Activated CD4-positive, alpha-beta memory T cell treated with anti-CD3 and anti-CD28 coated beads for 36 hours (primary cell): ENCODE measurements at regions of chr6 and their contacts with region 1.

Region 1: DNA sequence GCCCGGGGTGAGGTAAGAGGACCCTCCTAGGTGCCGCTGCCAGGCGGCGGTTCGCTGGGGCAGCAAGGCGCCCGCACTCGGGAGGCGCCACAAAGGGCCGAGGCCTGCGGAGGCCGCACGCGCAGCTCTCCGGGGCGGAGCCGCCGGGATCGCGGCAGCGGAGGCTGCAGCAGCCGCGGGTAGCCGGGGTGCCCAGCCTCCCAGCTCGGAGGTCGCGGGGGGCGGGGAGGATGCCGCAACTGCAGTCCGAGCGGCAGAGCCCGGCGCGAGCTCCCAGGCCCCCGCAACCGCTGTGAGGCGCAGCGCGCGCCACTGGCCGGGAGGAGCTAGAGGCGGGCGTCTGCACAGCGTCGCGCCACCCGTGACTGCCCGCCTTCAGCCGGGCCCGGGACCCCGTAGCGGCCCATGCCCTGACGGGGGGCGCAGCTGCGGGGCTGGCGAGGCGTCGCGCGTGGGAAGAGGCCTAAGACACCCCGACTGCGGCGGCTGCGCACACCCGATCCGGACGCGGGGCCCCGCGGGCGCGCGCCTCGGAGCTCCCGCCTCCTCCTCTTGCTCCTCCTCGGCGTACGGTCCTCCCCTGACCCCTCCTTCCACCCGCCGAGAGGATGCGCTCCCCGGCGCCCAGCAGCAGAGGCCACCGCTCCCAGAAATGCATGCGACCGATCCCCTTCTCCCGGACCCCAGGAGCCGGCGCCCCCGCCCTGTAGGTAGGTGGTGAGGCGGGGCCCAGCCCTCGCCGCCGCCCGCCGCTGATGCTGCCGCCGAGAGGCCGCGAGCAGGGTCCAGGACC is at the start of gene NCOA7:
- DNase-seq: peak; percentile 86
- H3K4me3 Mint-ChIP-seq: peak within 1 kb of the TSS; percentile 86
- H3K27ac Mint-ChIP-seq: peak within 1 kb of the TSS; percentile 96
- H3K4me1 Mint-ChIP-seq: peaks cover 54% of the 10 kb centered on the region
- H3K27me3 Mint-ChIP-seq: no peaks in the 10 kb centered on the region
- total RNA-seq, gene NCOA7: 42.3 to 43.4 TPM

Region 2: GRCh38 chr6:125804264-125804663 is 13.7 kb after region 1 on chr6:
- CTCF ChIA-PET with region 1: interaction called, 17 read pairs
- POLR2A ChIA-PET with region 1: interaction called, 7 read pairs
- intact Hi-C with region 1: loop called (anchors 1 kb)
- DNase-seq: peak; percentile 58
- H3K4me3 Mint-ChIP-seq: no peak overlapping the region
- H3K27ac Mint-ChIP-seq: peak overlapping the region; percentile 9
- H3K4me1 Mint-ChIP-seq: peaks cover 66% of the 10 kb centered on the region
- H3K27me3 Mint-ChIP-seq: peaks cover 2% of the 10 kb centered on the region

Region 3: DNA sequence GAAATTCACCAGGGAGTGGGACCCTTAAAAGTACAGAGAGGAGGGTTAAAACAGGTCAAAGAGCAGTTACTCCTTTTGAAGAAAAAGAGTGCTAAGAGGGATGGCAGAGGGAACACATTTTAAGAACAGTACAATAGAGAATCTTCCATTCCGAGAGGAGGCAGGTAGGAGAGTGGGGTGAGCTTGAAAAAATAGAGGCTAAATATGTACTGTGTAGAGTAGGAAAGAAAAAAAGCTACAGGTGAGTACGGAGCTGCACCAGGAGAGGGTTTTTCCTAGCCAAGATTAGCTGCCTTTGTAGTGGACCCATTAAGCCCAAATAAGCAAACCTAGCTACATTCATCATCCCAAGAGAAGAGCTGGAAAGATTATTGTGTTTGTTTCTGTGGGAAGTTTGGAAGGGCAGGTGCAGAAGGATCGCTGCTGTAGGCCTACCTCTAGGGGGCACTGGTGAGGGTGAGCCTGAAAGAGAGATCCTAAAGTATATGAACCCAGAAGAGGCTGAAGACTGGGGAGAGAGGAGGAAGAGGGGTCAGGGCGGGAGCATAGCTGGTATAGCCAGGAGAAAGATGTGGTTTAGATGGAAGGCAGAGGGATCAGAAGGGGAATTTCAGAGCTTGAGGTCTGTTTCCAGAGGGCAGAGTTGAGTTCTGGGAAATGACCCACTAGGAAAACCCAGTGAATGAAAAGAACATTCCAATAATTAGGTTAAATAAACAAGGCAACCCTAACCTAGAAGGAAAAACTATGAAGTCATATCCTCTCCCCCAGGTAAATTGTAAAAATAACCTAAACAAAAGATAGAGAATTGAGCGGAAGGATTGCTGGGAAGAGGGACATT is 115.8 kb after region 1 on chr6:
- CTCF ChIA-PET with region 1: interaction called, 11 read pairs
- POLR2A ChIA-PET with region 1: interaction called, 12 read pairs
- intact Hi-C with region 1: no loop called
- DNase-seq: peak; percentile 63
- H3K4me3 Mint-ChIP-seq: no peak overlapping the region
- H3K27ac Mint-ChIP-seq: peak overlapping the region; percentile 26
- H3K4me1 Mint-ChIP-seq: peaks cover 47% of the 10 kb centered on the region
- H3K27me3 Mint-ChIP-seq: no peaks in the 10 kb centered on the region

Region 4: GRCh38 chr6:125974214-125974866 is 183.8 kb after region 1 on chr6:
- CTCF ChIA-PET with region 1: interaction called, 28 read pairs
- POLR2A ChIA-PET with region 1: no interaction called
- intact Hi-C with region 1: no loop called
- DNase-seq: no peak
- H3K4me3 Mint-ChIP-seq: no peak overlapping the region
- H3K27ac Mint-ChIP-seq: no peak overlapping the region
- H3K4me1 Mint-ChIP-seq: peaks cover 4% of the 10 kb centered on the region
- H3K27me3 Mint-ChIP-seq: no peaks in the 10 kb centered on the region

Region 5: DNA sequence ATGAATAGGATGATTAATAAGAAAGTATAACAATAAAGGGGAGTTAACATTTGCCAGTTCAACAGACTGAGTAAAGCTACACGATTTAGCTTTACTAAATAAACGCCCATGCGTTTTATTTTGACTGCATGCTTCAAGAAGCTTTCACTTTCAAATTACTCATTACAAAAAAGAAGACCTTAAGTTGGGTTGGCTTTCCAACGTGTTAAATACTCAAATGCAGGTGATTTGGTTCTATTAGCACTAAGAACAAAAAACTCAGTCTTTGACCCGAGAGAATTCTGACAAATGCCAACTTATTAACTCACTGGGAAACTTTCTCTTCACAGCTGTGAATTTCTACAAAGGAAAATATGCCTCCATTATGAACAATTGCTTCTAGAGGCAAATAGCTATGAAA is 1500.9 kb after region 1 on chr6:
- CTCF ChIA-PET with region 1: no interaction called
- POLR2A ChIA-PET with region 1: no interaction called
- intact Hi-C with region 1: loop called (anchors 10 kb)
- DNase-seq: no peak
- H3K4me3 Mint-ChIP-seq: no peak overlapping the region
- H3K27ac Mint-ChIP-seq: peak overlapping the region; percentile 49
- H3K4me1 Mint-ChIP-seq: peaks cover 45% of the 10 kb centered on the region
- H3K27me3 Mint-ChIP-seq: no peaks in the 10 kb centered on the region